ENCODE measurements at regions of chr1 and their contacts with region 1.

Region 1: DNA sequence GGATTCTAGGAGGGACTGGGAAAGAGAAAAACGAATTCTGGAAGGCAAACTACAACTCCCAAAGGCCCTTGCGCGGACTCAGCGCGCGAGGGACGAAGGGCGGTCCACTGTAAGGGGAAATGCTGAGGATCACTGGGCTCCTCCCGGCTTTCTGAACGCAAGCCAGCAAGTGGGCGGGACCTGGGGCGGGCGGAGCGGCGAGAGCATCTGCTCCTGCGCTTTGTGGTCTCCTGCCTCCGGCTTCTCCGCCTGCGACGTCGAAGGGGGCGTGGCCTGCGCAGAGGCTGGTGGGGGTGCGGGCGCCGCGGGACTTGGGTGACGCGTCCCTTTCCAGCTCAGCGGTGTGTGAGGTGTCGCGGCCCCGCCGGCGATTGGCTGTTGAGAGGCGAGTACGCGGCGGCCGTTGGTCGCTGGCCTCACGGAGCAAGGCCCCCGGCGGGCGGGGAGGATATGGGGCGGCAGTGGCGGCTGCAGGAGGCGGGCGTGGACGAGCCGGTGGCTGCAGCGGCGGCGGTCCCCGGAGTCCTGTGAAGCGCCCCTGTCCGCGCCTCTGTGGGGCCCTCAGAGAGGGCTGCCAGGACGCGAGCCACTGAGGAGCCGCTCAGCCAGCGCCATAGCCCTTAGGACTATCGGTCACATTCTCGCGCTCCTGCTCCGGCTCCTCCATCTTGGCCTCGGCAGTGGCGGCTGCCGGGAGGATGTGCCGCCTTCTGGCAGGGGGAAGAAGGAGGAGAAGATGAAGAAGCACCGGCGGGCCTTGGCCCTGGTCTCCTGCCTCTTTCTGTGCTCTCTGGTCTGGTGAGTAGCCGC is at the start of gene SUCO:
- DNase-seq: peak; percentile 100
- H3K4me3 Mint-ChIP-seq: peak within 1 kb of the TSS; percentile 98
- H3K27ac Mint-ChIP-seq: peak within 1 kb of the TSS; percentile 99
- H3K4me1 Mint-ChIP-seq: peaks cover 48% of the 10 kb centered on the region
- H3K27me3 Mint-ChIP-seq: peaks cover 7% of the 10 kb centered on the region
- total RNA-seq, gene SUCO: 39.3 and 40.4 TPM in 2 replicates

Region 2: GRCh38 chr1:171901245-171901644 is 631.7 kb before region 1 on chr1:
- intact Hi-C with region 1: no loop called
- DNase-seq: no peak
- H3K4me3 Mint-ChIP-seq: no peak overlapping the region
- H3K27ac Mint-ChIP-seq: no peak overlapping the region
- H3K4me1 Mint-ChIP-seq: peaks cover 6% of the 10 kb centered on the region
- H3K27me3 Mint-ChIP-seq: peaks cover 2% of the 10 kb centered on the region

Region 3: GRCh38 chr1:172180501-172181285 is 352.2 kb before region 1 on chr1:
- intact Hi-C with region 1: loop called (anchors 10 kb)
- DNase-seq: peak; percentile 22
- H3K4me3 Mint-ChIP-seq: peak overlapping the region; percentile 75
- H3K27ac Mint-ChIP-seq: peak overlapping the region; percentile 94
- H3K4me1 Mint-ChIP-seq: peaks cover 50% of the 10 kb centered on the region
- H3K27me3 Mint-ChIP-seq: no peaks in the 10 kb centered on the region

Region 4: GRCh38 chr1:172638885-172639831 is 106.3 kb after region 1 on chr1:
- intact Hi-C with region 1: loop called (anchors 1 kb)
- DNase-seq: peak; percentile 77
- H3K4me3 Mint-ChIP-seq: peak overlapping the region; percentile 62
- H3K27ac Mint-ChIP-seq: peak overlapping the region; percentile 99
- H3K4me1 Mint-ChIP-seq: peaks cover 75% of the 10 kb centered on the region
- H3K27me3 Mint-ChIP-seq: peaks cover 5% of the 10 kb centered on the region

Region 5: DNA sequence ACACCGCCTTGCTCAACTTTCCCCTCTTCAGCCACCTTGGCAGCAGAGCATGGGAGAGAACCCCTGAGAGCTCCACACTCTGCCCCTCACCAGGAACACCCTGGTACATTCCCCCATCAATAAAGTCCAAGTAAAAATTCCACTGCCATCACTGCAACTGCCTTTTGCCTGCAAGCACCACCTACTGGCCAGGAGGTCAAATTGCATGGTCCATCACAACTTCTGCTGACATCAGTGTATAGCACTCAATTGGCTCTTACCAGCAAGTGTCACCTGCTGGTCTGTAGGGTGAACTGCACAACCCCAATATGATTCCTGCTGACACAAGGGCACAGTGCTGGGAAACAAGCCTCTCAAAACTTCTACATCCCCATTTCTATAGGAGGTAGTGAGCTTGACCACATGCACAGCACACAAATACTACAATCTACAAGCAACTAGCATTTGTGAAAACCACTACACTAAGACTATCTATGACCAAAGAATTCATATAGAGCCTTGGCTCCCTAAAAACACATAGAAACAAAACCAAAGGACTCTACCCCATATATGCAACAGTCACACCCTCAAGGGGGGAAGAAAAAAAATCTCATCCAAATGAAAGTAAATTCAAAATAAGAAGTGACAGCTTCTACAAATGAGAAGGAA is 195.2 kb after region 1 on chr1:
- intact Hi-C with region 1: loop called (anchors 1 kb)
- DNase-seq: peak; percentile 37
- H3K4me3 Mint-ChIP-seq: no peak overlapping the region
- H3K27ac Mint-ChIP-seq: no peak overlapping the region
- H3K4me1 Mint-ChIP-seq: peaks cover 18% of the 10 kb centered on the region
- H3K27me3 Mint-ChIP-seq: peaks cover 15% of the 10 kb centered on the region

Region 6: DNA sequence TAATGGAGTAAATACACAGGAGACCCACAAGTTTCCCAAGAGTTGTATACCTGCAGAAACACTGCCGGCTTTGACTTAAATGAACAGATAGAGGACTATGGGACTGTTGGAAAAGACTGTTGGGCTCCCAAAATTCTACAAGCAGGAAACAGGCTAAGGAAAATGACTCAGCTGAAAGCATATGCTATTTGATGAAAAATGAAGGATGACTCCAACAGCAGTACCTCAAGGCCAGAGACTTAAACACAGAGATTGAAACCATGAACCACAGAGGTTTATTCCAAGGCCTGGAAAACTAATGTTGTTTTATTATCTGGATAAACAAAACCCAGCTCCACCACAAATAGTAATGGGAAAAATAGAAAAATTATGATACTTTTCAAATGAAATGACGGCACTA is 330.1 kb after region 1 on chr1:
- intact Hi-C with region 1: no loop called
- DNase-seq: no peak
- H3K4me3 Mint-ChIP-seq: no peak overlapping the region
- H3K27ac Mint-ChIP-seq: no peak overlapping the region
- H3K4me1 Mint-ChIP-seq: peaks cover 5% of the 10 kb centered on the region
- H3K27me3 Mint-ChIP-seq: peaks cover 30% of the 10 kb centered on the region

Region 7: GRCh38 chr1:173824331-173825081 is 1291.6 kb after region 1 on chr1 and contains the starts of genes CENPL and DARS2:
- intact Hi-C with region 1: loop called (anchors 1 kb)
- DNase-seq: peak; percentile 90
- H3K4me3 Mint-ChIP-seq: peak within 1 kb of the TSS; percentile 91
- H3K27ac Mint-ChIP-seq: peak within 1 kb of the TSS; percentile 95
- H3K4me1 Mint-ChIP-seq: peaks cover 48% of the 10 kb centered on the region
- H3K27me3 Mint-ChIP-seq: no peaks in the 10 kb centered on the region
- total RNA-seq, gene CENPL: 23.6 and 25.7 TPM in 2 replicates
- total RNA-seq, gene DARS2: 41.9 TPM in 2 replicates

Measured in activated T-helper 1 cell treated with anti-CD3 and anti-CD28 coated beads, Interleukin-12 subunit alpha, Interleukin-12 subunit beta, Interleukin-2, Interleukin-4 antibody, amounts not matched to agents 30 ng/mL and 10 ng/mL and 1 ng/mL, durations not matched to agents 14 hours and 24 hours and 36 hours (primary cell).